A549 (cell line): ENCODE measurements at regions of chr16 and their contacts with region 1.

Region 1: DNA sequence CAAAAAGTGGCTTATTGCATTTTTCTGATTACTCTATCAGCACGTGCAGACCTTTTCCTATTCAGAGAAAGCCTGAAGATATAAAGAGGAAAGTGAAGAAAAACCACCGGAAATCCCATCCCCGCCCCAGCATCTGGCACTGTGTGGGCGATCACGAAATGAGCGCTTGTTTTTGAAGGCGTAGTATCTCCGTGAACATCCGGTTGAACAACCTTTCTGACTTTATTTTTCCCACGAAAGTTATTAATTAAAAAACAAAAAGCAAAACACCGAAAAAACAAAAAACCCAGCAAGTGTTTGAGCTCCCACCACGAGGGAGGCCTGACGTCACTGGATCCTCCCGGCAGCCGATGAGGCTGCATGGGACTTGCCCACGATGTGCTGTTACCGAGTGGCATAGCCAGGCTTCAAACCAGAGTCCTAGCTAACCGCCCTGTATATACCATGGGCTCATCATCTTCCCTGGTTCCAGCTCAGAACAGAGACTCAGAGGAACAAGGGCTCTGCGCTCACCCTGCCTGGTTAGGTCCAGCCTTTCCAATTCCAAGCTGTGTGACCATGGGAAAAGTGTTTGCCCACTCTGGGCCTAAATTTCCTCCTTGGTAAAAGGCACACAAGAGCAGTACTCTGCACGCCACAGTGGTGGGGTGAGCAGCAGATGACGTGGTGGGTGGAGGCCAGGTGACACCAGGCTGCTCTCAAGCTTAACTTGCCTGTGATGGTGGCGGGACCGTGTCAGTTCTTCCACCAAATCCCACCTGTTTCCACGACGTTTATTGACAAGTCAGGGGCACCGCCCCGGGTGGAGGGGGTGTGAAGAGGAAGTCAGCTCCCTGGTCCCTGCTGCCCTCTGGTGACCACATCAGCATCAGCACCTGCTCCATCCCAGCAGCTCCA is 34.3 kb upstream of the IL21R start:
- DNase-seq: peak; percentile 74 to 87
- ATAC-seq: peak; percentile 69 to 77
- H3K4me3 ChIP-seq: no peak overlapping the region
- H3K27ac ChIP-seq: peak overlapping the region; percentile 25 to 83; a peak in 4 of 6 replicates
- H3K4me1 ChIP-seq: peaks cover 40% of the 10 kb centered on the region
- CTCF ChIP-seq: peak; percentile 91
- EP300 ChIP-seq: no peak
- POLR2A ChIP-seq: no peak
- RAD21 ChIP-seq: peak; percentile 93 to 97

Region 2: GRCh38 chr16:27154705-27155521 is 212.8 kb before region 1 on chr16:
- CTCF ChIA-PET with region 1: interaction called, 80 read pairs
- POLR2A ChIA-PET with region 1: no interaction called
- DNase-seq: peak; percentile 31 to 60
- ATAC-seq: peak; percentile 68 to 95; a peak in 4 of 6 replicates
- H3K4me3 ChIP-seq: peak overlapping the region; percentile 17; the same call in 1 of the 3 replicates
- H3K27ac ChIP-seq: no peak overlapping the region
- H3K4me1 ChIP-seq: no peaks in the 10 kb centered on the region
- CTCF ChIP-seq: peak; percentile 84
- EP300 ChIP-seq: no peak
- POLR2A ChIP-seq: no peak
- RAD21 ChIP-seq: peak; percentile 71 to 72; a peak in 4 of 5 replicates

Region 3: GRCh38 chr16:27203429-27204231 is 164.1 kb before region 1 on chr16 and contains the start of gene KDM8:
- CTCF ChIA-PET with region 1: interaction called, 10 read pairs
- POLR2A ChIA-PET with region 1: interaction called, 10 read pairs
- DNase-seq: peak; percentile 98 to 100
- ATAC-seq: peak; percentile 89 to 97
- H3K4me3 ChIP-seq: peak within 1 kb of the TSS; percentile 59
- H3K27ac ChIP-seq: peak within 1 kb of the TSS; percentile 92 to 95
- H3K4me1 ChIP-seq: peaks cover 10% of the 10 kb centered on the region; the same call in 2 of the 3 replicates
- CTCF ChIP-seq: no peak
- EP300 ChIP-seq: no peak
- POLR2A ChIP-seq: peak; percentile 77
- RAD21 ChIP-seq: no peak
- polyA plus RNA-seq, gene KDM8: 1.6 and 2.0 TPM in 2 replicates

Region 4: GRCh38 chr16:27268376-27269299 is 99.1 kb before region 1 on chr16 and contains the start of gene NSMCE1:
- CTCF ChIA-PET with region 1: interaction called, 10 read pairs
- POLR2A ChIA-PET with region 1: interaction called, 4 read pairs
- DNase-seq: peak; percentile 96 to 97
- ATAC-seq: peak; percentile 100
- H3K4me3 ChIP-seq: peak within 1 kb of the TSS; percentile 70
- H3K27ac ChIP-seq: peak within 1 kb of the TSS; percentile 84 to 97
- H3K4me1 ChIP-seq: peaks cover 35% of the 10 kb centered on the region
- CTCF ChIP-seq: no peak
- EP300 ChIP-seq: no peak
- POLR2A ChIP-seq: peak; percentile 81
- RAD21 ChIP-seq: no peak
- polyA plus RNA-seq, gene NSMCE1: 32.0 and 33.3 TPM in 2 replicates

Region 5: GRCh38 chr16:27340654-27341053 is 27.1 kb before region 1 on chr16:
- CTCF ChIA-PET with region 1: interaction called, 18 read pairs
- POLR2A ChIA-PET with region 1: no interaction called
- DNase-seq: no peak
- ATAC-seq: no peak
- H3K4me3 ChIP-seq: no peak overlapping the region
- H3K27ac ChIP-seq: no peak overlapping the region
- H3K4me1 ChIP-seq: no peaks in the 10 kb centered on the region
- CTCF ChIP-seq: no peak
- EP300 ChIP-seq: no peak
- POLR2A ChIP-seq: no peak
- RAD21 ChIP-seq: no peak

Region 6: DNA sequence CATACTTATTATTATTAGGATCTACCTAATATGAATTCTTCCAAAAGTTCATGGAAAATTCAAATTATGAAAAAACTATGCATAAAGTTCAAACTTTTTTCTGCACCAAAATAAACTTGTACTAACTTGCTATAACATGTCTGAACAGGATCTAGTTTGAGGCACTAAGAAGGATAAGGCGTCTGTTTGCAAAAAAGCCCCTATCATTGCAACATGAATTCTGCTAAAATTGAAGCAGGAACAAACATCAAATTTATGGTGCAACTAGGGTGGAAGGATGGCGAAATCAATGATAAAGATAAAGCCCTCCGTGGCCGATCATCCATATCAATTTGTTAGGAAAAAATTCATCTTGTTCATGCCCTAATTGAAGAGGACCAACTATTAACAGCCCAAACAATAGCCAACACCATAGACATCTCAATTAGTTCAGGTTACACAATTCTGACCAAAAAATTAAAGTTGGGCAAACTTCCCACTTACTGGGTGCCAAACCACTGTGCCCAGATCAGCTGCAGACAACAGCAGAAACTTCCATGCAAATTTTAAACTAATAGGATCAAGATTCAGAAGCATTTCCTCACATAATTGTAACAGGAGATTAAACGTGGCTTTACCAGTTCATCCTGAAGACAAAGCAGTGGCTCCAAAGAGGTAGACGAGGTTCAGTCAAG is 47.2 kb after region 1 on chr16:
- CTCF ChIA-PET with region 1: no interaction called
- POLR2A ChIA-PET with region 1: no interaction called
- DNase-seq: no peak
- ATAC-seq: no peak
- H3K4me3 ChIP-seq: no peak overlapping the region
- H3K27ac ChIP-seq: no peak overlapping the region
- H3K4me1 ChIP-seq: no peaks in the 10 kb centered on the region
- CTCF ChIP-seq: no peak
- EP300 ChIP-seq: no peak
- POLR2A ChIP-seq: no peak
- RAD21 ChIP-seq: no peak

Region 7: DNA sequence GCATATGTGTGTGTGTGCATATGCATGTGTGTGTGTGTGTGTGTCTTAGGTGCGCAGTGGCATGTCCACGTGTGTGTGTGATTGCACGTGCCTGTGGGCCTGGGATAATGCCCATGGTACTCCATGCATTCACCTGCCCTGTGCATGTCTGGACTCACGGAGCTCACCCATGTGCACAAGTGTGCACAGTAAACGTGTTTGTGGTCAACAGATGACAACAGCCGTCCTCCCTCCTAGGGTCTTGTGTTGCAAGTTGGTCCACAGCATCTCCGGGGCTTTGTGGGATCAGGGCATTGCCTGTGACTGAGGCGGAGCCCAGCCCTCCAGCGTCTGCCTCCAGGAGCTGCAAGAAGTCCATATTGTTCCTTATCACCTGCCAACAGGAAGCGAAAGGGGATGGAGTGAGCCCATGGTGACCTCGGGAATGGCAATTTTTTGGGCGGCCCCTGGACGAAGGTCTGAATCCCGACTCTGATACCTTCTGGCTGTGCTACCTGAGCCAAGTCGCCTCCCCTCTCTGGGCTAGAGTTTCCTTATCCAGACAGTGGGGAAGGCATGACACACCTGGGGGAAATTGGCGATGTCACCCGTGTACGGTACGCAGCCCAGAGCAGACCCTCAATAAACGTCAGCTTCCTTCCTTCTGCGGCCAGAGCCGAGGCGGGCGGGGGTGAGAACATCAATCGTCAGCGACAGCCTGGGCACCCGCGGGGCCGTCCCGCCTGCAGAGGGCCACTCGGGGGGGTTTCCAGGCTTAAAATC is 81.9 kb after region 1 on chr16:
- CTCF ChIA-PET with region 1: interaction called, 11 read pairs
- POLR2A ChIA-PET with region 1: no interaction called
- DNase-seq: no peak
- ATAC-seq: no peak
- H3K4me3 ChIP-seq: no peak overlapping the region
- H3K27ac ChIP-seq: no peak overlapping the region
- H3K4me1 ChIP-seq: no peaks in the 10 kb centered on the region
- CTCF ChIP-seq: no peak
- EP300 ChIP-seq: no peak
- POLR2A ChIP-seq: no peak
- RAD21 ChIP-seq: no peak